Mammary epithelial cell (primary cell): ENCODE measurements at regions of chr2 and their contacts with region 1.

Region 1: GRCh38 chr2:216698895-216699294 is 3.5 kb upstream of the IGFBP5 start:
- DNase-seq: peak; percentile 49
- H3K4me3 ChIP-seq: no peak overlapping the region
- H3K27ac ChIP-seq: no peak overlapping the region
- H3K4me1 ChIP-seq: peaks cover 14% of the 10 kb centered on the region
- H3K27me3 ChIP-seq: peaks cover 4% of the 10 kb centered on the region
- CTCF ChIP-seq: peak; percentile 77 to 83

Region 2: DNA sequence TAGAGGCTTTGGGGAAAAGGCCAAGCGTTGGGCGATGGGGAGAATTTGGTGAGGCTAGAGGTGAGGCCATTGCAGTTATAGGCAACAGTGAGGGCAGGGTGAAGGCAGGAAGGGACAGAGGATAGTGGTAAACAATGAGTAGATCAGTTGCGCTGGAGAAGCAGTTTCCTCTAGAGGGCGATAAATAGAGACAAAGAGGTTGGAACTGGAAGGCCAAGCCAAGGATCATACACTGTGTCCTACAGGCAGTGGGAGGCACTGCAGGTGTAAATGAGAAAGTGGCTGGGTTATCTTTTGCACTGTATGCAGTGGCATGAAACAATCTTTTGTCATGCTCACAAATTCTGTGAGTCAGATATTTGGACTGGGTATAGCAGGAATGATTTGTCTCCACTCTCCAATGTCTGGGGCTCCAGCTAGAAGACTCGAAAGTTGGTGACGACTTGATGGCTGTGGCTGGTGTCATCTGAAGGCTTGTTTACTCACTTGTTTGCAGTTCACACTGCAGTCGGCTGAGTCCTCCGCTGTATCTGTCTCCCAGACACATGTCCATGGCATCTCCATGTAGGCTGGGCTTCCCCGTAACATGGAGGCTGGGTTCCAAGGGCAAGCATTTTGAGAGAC is 78.9 kb after region 1 on chr2:
- CTCF ChIA-PET with region 1: no interaction called
- dilution Hi-C with region 1: no loop called
- in situ Hi-C with region 1: no loop called
- intact Hi-C with region 1: loop called (anchors 1 kb)
- DNase-seq: peak; percentile 76
- H3K4me3 ChIP-seq: no peak overlapping the region
- H3K27ac ChIP-seq: no peak overlapping the region
- H3K4me1 ChIP-seq: peaks cover 13% of the 10 kb centered on the region
- H3K27me3 ChIP-seq: no peaks in the 10 kb centered on the region
- CTCF ChIP-seq: peak; percentile 96 to 97

Region 3: DNA sequence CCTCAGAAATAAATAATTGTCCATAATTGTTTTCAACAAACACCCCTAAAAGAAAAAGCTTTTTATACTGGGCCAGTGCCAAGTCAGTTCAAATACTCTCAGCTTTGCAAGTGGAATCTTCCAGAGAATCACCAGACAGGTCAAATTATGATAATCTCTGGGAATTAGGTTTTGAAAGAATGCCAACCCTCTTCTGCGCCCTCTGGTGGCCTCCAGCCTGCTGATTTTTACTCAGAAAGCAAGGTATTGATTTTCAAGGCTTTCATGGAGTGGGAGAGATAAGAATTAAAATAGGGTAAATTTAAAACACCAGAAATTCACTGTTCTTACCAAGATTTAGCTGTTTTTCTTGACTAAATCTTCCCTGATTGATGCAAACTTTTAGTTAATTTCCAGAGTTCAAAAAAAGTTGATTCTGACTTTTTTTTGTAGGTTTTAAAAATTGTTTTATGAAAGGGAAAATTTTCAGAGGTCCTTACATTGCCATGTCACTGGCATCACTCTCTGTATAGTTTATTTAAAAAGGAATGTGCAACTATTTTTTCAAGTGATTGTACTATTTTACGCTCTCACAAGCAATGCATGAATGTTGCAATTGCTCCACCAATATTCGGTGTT is 443.9 kb after region 1 on chr2:
- CTCF ChIA-PET with region 1: interaction called, 7 read pairs
- dilution Hi-C with region 1: loop called (anchors 25 kb)
- in situ Hi-C with region 1: no loop called
- intact Hi-C with region 1: loop called (anchors 1 kb)
- DNase-seq: peak; percentile 17
- H3K4me3 ChIP-seq: no peak overlapping the region
- H3K27ac ChIP-seq: no peak overlapping the region
- H3K4me1 ChIP-seq: no peaks in the 10 kb centered on the region
- H3K27me3 ChIP-seq: no peaks in the 10 kb centered on the region
- CTCF ChIP-seq: peak; percentile 78 to 81

Region 4: GRCh38 chr2:217393585-217394032 is 694.7 kb after region 1 on chr2:
- CTCF ChIA-PET with region 1: no interaction called
- dilution Hi-C with region 1: no loop called
- in situ Hi-C with region 1: no loop called
- intact Hi-C with region 1: loop called (anchors 2 kb)
- DNase-seq: peak; percentile 91
- H3K4me3 ChIP-seq: peak overlapping the region; percentile 27 to 42 (median 36)
- H3K27ac ChIP-seq: peak overlapping the region; percentile 73
- H3K4me1 ChIP-seq: peaks cover 21% of the 10 kb centered on the region
- H3K27me3 ChIP-seq: no peaks in the 10 kb centered on the region
- CTCF ChIP-seq: no peak

Region 5: DNA sequence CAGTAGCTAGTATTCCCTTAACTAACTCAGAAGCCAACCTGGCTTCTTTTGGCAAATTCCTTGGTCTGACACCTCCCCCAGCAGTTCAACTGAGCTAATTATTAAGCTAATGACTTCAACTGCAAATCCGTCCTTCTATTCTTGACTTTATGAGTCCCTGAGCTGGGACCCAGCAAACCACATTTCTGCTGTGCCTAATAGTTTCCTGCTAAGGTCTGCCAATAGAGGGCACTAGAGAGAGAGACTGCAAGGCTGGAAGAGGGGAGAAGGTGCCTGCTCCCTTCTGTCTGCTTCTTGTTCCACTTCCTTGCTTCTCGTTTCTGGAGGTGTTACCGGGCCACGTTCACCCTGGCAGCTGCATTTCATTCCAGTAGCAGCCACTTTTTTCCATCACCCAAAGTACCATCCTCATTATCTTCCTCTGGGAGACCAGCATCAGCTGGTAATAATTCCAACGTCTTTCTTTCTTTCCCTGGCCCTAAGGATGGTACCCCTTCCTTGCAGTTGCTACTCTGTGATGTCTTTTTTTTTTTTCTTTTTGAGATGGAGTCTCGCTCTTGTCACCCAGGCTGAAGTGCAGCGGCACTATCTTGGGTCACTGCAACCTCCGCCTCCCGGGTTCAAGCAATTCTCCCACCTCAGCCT is 951.9 kb after region 1 on chr2:
- CTCF ChIA-PET with region 1: no interaction called
- dilution Hi-C with region 1: no loop called
- in situ Hi-C with region 1: no loop called
- intact Hi-C with region 1: loop called (anchors 5 kb)
- DNase-seq: peak; percentile 63
- H3K4me3 ChIP-seq: no peak overlapping the region
- H3K27ac ChIP-seq: no peak overlapping the region
- H3K4me1 ChIP-seq: peaks cover 12% of the 10 kb centered on the region
- H3K27me3 ChIP-seq: no peaks in the 10 kb centered on the region
- CTCF ChIP-seq: peak; percentile 92